ENCODE measurements at regions of chr1 and their contacts with region 1.

Region 1: GRCh38 chr1:23809751-23810171 is 9.2 kb upstream of the GALE start:
- DNase-seq: peak; percentile 89 to 94 (median 94)
- H3K4me3 ChIP-seq: no peak overlapping the region
- H3K27ac ChIP-seq: no peak overlapping the region
- H3K4me1 ChIP-seq: peaks cover 6 to 53% (median 39%) of the 10 kb centered on the region in 4 experiments
- H3K27me3 ChIP-seq: no peaks in the 10 kb centered on the region

Region 2: DNA sequence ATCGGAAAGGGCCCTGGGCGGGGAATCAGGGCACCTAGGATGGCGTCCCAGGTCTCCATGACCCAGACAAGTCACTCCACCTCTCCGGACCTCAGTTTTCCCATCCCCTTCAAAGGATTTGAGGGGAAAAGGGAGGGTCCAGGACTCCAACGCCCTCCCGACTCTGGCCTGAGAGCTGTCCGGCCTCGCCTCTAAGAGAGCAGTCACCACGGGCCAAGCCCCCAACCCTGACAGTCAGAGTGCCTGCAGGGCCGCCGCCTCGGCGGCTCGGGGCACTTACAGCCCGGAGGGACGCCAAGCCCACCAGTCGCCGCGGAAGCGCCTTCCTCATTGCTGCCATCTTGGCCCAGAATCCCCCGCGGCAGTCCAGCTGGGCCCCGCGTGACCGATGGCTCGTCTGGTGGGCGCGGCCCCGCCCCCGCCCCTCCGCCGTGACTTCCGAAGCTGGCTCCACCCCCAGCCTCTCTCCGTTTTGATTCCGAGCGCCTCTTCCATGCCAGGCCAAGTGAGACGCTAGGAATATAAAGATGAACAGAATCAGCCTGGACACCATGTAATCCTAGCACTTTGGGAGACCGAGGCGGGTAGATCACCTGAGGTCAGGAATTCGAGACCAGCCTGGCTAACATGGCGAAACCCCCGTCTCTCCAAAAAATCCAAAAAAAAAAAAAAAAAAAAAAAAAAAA is 15.5 kb after region 1 on chr1 and contains the start of gene HMGCL:
- CTCF ChIA-PET with region 1: interaction called, 87 read pairs
- POLR2A ChIA-PET with region 1: interaction called, 3 read pairs
- DNase-seq: peak; percentile 91 to 95 (median 94)
- H3K4me3 ChIP-seq: peak within 1 kb of the TSS; percentile 57 to 99 (median 97)
- H3K27ac ChIP-seq: peak within 1 kb of the TSS; percentile 88 to 97
- H3K4me1 ChIP-seq: peaks cover 4 to 18% (median 15%) of the 10 kb centered on the region in 4 experiments
- H3K27me3 ChIP-seq: no peaks in the 10 kb centered on the region

Region 3: DNA sequence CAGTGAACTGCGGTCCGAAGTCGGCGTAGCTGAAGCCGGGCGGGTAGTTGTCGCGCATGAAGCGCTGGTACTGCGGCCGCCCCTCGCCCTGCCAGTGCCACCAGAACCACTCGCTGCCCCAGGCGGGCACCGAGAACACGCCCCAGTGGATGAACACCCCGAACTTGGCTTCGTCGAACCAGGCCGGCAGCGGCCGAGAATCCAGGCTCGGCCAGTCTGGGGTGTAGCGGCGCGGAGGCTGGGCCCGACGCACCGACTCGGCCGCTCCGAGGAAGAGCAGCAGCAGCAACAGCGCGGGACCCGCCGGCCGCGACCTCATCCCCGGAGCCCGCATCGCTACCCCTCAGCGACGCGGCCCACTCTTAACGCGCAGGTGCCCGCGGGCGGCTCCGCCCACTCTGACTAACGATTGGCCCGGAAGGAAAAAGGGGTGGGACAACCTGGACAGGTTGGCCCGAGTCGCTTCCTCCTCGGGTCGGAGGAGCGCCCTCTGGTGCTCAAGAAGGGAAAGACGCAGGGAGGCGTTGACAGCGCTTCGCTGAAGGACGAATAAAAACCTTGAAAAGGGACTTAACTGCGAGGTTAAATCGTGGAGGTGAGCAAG is 58.3 kb after region 1 on chr1 and contains the start of gene FUCA1:
- CTCF ChIA-PET with region 1: interaction called, 68 read pairs
- POLR2A ChIA-PET with region 1: no interaction called
- DNase-seq: peak; percentile 95 to 98 (median 97)
- H3K4me3 ChIP-seq: peak within 1 kb of the TSS; percentile 63 to 87 (median 82)
- H3K27ac ChIP-seq: peak within 1 kb of the TSS in 1 of 2 experiments; percentile 55
- H3K4me1 ChIP-seq: peaks cover 15 to 44% (median 29%) of the 10 kb centered on the region in 4 experiments
- H3K27me3 ChIP-seq: no peaks in the 10 kb centered on the region

Region 4: GRCh38 chr1:23897083-23897482 is 87.3 kb after region 1 on chr1:
- CTCF ChIA-PET with region 1: interaction called, 18 read pairs
- POLR2A ChIA-PET with region 1: interaction called, 3 read pairs
- DNase-seq: peak in 2 of 3 donors; percentile 74 to 81
- H3K4me3 ChIP-seq: no peak overlapping the region
- H3K27ac ChIP-seq: no peak overlapping the region
- H3K4me1 ChIP-seq: peaks cover 9 to 49% (median 31%) of the 10 kb centered on the region in 4 experiments
- H3K27me3 ChIP-seq: peaks cover 0 to 12% (median 0%) of the 10 kb centered on the region in 5 experiments

Region 5: GRCh38 chr1:23916209-23917131 is 106.7 kb after region 1 on chr1:
- CTCF ChIA-PET with region 1: interaction called, 108 read pairs
- POLR2A ChIA-PET with region 1: interaction called, 3 read pairs
- DNase-seq: peak; percentile 82 to 90 (median 87)
- H3K4me3 ChIP-seq: peak overlapping the region in 4 of 7 experiments; percentile 23 to 43 (median 32)
- H3K27ac ChIP-seq: no peak overlapping the region
- H3K4me1 ChIP-seq: peaks cover 21 to 87% (median 67%) of the 10 kb centered on the region in 4 experiments
- H3K27me3 ChIP-seq: no peaks in the 10 kb centered on the region